ENCODE measurements at regions of chr10 and their contacts with region 1.

Region 1: DNA sequence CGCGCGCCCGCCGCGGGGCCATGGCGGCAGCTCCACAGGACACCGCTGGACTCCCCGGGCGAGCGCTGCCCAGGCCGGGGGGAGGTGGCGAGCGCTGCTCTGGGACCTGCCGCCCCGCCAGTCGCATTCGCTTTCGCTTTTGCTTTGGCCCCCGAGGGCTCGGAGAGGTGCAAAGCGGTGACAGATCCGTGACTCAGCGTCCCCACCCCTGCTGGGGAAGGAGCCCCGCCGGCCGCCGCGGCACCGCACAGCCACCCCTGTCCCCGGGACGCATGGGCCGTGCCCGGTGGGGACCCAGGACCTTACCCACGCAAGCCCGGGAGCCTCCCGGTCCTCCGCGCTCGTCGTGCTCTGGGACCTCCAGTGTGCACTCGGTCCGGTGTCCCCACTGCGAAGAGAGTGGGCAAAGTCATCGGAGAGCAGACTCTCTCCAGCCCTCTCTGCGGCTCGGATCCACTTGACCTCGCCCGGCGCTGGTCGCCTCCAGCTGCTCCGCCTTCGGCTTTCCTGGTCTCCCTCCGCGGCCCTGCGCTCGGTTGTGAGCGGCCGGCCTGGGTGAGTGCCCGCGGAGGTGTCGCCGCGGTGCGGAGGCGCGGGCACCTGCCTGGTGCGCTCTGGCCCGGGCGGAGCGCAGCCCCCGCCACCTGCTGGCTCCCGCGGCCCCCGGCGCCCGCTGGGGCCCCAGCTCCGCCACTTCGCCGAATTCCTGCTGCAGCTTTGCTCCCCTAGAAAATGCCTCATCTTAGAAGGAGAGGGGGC is at the start of gene IL15RA:
- DNase-seq: peak; percentile 97
- H3K4me3 Mint-ChIP-seq: peak within 1 kb of the TSS; percentile 97
- H3K27ac Mint-ChIP-seq: peak within 1 kb of the TSS; percentile 95
- H3K4me1 Mint-ChIP-seq: peaks cover 27% of the 10 kb centered on the region
- H3K27me3 Mint-ChIP-seq: peaks cover 4% of the 10 kb centered on the region
- total RNA-seq, gene IL15RA: 24.4 and 25.5 TPM in 2 replicates

Region 2: DNA sequence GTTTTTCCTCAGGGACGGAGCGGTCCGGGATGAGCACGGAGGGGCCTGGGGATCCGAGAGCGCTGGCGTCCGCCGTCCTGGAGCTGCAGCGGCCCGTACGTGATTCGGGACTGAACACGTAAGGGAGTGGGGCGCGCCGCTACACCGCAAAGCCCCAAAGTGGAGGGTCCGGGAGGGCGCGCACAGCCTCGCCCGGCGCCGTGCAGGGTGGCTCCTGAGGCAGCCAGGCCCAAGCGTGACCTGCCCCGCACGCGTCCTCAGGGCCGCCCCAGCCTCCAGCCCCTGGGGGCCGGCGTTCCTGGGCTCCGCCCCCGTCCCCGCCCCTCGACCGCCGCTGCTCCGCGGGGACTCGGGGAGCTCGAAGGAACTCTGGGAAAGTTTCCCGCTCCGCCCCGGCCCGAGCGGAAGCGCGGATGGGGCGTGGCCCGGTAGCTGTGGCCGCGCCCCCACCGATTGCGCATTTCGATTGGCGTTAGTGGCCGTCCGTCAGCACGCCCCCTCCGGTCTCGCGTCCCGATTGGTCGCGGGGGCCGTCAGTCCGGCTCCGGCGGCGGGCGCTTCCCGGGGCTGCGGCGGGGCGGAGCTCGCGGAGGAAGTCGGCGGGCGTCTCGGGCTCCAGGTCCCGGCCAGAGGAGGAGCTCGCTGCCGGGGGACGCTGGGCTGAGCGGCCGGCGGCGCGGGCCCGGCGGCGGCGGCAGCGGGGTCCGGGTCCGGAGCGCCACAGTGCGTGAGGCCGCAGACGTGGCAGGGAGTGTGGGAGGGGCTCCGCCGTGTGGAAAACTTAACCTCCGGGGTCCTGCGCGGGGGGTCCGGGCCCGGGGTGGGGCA is 87.8 kb before region 1 on chr10 and contains the starts of genes ANKRD16 and FBH1:
- intact Hi-C with region 1: loop called (anchors 2 kb)
- DNase-seq: peak; percentile 100
- H3K4me3 Mint-ChIP-seq: peak within 1 kb of the TSS; percentile 94
- H3K27ac Mint-ChIP-seq: peak within 1 kb of the TSS; percentile 85
- H3K4me1 Mint-ChIP-seq: peaks cover 40% of the 10 kb centered on the region
- H3K27me3 Mint-ChIP-seq: no peaks in the 10 kb centered on the region
- total RNA-seq, gene ANKRD16: 10.8 and 12.2 TPM in 2 replicates
- total RNA-seq, gene FBH1: 58.4 and 62.9 TPM in 2 replicates

Region 3: DNA sequence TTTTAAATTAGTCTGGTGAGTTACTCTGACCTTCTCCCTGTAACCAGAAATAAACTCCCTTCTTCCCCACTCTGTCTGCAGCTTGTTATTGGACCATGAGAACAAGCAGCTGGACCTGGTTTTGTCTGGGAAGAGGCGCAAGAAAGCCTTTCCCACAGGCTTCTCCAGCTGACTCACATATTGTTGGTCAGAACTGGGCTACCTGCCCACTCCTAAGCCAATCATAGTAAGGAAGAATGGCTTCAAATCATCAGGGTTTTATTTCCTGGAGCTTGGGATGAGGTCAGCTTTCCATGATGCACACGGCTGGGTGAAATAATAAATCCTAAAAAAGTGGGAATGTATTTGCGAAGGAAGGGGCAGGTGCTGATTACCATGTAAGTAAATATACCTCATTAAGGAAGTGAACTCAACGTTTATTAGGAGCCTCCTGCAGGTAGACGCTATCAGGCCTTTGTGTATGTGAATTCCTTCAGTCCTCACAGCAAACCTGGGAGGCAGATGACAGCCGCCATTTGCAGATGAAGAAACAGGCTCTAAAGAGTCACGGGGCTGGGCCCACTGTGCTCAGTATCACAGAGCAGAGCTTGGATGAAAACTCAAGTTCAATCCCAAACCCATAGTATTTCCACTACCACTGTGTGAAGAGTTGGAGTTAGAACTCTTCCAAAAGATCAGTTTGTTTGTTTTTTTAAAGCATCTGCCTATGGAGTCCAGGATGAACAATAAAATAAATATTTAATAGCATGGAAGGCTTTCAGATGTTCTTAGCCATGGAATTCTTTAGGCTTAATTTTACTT is 33.1 kb before region 1 on chr10:
- intact Hi-C with region 1: no loop called
- DNase-seq: no peak
- H3K4me3 Mint-ChIP-seq: no peak overlapping the region
- H3K27ac Mint-ChIP-seq: no peak overlapping the region
- H3K4me1 Mint-ChIP-seq: peaks cover 12% of the 10 kb centered on the region
- H3K27me3 Mint-ChIP-seq: no peaks in the 10 kb centered on the region

Region 4: GRCh38 chr10:6009150-6009549 is 31.5 kb after region 1 on chr10:
- intact Hi-C with region 1: loop called (anchors 1 kb)
- DNase-seq: no peak
- H3K4me3 Mint-ChIP-seq: no peak overlapping the region
- H3K27ac Mint-ChIP-seq: peak overlapping the region; percentile 67
- H3K4me1 Mint-ChIP-seq: peaks cover 20% of the 10 kb centered on the region
- H3K27me3 Mint-ChIP-seq: no peaks in the 10 kb centered on the region